Heart right ventricle (tissue), 16 donors: ENCODE measurements at regions of chr15 and their contacts with region 1.

Region 1: DNA sequence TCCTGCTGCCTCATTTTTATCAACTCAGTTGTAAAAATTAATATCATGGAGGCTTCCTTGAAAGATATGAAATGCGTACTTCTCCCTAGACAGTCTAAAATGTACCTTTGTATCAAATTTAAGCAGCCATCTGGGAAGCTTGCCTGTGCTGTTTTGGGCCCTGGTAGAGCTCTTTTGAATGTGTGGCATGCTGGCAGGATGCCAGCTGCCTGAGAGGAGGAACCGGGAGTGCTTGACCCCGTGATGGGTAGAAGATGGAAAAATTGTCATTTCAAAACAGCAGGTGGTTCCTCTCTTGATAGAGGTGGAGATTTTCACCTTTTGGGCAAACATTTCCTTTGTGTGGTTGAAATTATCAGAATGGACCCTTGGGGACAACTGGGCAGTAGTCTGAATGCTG is 245.3 kb downstream of the RPLP1 start:
- DNase-seq: peak; percentile 14 to 35
- ATAC-seq: peak in 4 of 8 donors; percentile 31 to 57 (median 41)
- H3K4me3 ChIP-seq: no peak overlapping the region
- H3K27ac ChIP-seq: no peak overlapping the region
- H3K4me1 ChIP-seq: peaks cover 0 to 9% (median 0%) of the 10 kb centered on the region in 9 donors
- H3K27me3 ChIP-seq: peaks cover 0 to 4% (median 0%) of the 10 kb centered on the region in 7 donors
- CTCF ChIP-seq: no peak

Region 2: DNA sequence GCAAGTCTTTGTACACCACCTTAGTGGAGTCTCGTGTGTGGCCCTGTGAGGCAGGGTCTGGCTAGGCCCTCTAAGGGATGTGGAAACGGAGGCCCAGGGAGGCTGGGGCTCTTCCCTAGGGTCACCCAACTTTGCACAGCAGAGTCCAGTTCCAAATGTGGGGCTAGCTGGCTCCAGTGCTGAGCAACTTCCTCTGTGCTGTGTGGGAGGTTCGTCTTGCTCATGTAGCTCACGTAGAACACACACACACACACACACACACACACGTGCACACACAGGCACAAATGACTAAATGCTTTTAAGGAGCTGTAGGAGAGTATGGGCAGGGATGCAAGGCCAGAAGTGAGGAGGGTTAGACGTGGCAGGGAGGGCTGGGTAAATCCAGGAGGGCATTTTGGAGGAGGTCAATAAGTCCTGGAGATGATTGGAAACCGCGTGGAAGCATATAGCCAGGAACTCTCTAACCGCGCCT is 31.5 kb before region 1 on chr15:
- intact Hi-C with region 1: loop called in 1 of 10 experiments (anchors 1 kb)
- DNase-seq: peak in 1 of 2 donors; percentile 24
- ATAC-seq: peak in 7 of 8 donors; percentile 24 to 61 (median 41)
- H3K4me3 ChIP-seq: no peak overlapping the region
- H3K27ac ChIP-seq: peak overlapping the region in 2 of 10 donors; percentile 62 to 85
- H3K4me1 ChIP-seq: peaks cover 0 to 47% (median 11%) of the 10 kb centered on the region in 9 donors
- H3K27me3 ChIP-seq: peaks cover 0 to 35% (median 11%) of the 10 kb centered on the region in 7 donors
- CTCF ChIP-seq: no peak